ENCODE measurements at regions of chr1 and their contacts with region 1.

Region 1: GRCh38 chr1:54950369-54951163 is 29.9 kb upstream of the TMEM61 start:
- DNase-seq: peak; percentile 60
- H3K4me3 Mint-ChIP-seq: no peak overlapping the region
- H3K27ac Mint-ChIP-seq: peak overlapping the region; percentile 68
- H3K4me1 Mint-ChIP-seq: peaks cover 18% of the 10 kb centered on the region
- H3K27me3 Mint-ChIP-seq: peaks cover 6% of the 10 kb centered on the region

Region 2: DNA sequence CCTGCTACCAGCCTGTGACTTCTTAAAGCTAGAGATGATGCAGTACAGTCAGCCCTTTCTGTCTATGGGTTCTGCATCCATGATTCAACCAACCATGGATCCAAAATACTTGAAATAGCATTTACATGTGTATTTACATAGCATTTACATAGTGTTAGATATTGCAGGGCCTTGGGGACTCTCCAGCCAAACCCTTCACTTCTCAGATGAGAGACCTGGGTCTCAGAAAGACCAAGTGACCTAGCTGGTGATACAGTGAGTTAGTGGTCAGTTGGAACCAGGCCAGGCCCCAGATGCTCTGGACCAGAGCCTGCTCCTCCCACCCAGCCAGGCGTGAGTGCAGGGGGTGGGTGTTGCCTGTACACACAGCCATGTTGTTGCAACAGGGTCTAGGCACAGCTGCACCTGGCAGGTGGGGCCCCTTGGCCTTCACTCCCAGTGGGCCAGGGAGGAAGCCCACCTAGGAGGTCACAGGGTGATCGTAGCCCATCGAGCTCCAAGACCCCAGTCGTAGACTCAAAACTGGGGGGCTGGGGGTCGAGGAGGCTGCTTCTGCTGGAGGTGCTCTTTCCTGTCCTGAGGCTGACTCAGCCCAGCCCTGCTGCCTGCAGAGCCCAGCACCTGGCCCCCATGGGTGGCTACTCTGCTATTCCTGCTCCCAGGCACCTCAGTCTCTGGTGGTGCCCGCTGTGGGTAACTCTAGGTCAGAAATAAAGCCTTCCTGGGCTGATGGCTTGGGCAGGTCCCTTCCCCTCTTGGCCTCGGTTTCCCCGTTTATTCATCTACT is 37.5 kb after region 1 on chr1:
- CTCF ChIA-PET with region 1: interaction called, 15 read pairs
- POLR2A ChIA-PET with region 1: no interaction called
- DNase-seq: no peak
- H3K4me3 Mint-ChIP-seq: no peak overlapping the region
- H3K27ac Mint-ChIP-seq: no peak overlapping the region
- H3K4me1 Mint-ChIP-seq: no peaks in the 10 kb centered on the region
- H3K27me3 Mint-ChIP-seq: peaks cover 10% of the 10 kb centered on the region

Region 3: DNA sequence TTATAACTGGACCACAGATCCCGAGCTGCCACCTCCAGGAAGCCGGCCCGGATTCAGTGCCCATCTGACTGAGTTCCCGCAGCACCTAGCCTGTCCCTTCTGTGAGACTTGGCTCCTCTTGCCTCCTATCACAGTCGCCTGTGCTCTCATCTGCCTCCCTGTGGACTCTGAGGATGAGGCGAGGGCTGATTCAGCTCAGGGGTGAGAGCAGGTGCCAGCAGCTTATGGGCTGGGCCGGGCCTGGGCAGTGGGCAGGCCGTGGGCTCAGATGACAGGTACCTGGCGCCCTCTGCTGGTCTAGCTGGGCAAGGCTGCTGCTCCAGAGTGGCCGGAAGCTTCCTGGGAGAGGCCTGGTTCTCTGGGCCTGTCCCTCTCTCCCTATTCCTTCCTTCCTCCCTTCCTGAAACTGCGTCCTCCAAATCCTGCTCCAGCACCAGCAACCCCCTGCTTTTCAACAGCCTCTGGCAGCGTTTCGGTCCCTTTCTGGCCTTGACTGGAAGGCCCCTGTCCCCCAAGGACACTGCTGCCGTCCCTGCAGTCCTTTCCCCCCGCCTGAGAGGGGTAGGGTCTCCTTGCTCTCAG is 71.5 kb after region 1 on chr1:
- CTCF ChIA-PET with region 1: interaction called, 30 read pairs
- POLR2A ChIA-PET with region 1: no interaction called
- DNase-seq: peak; percentile 73
- H3K4me3 Mint-ChIP-seq: no peak overlapping the region
- H3K27ac Mint-ChIP-seq: no peak overlapping the region
- H3K4me1 Mint-ChIP-seq: peaks cover 3% of the 10 kb centered on the region
- H3K27me3 Mint-ChIP-seq: no peaks in the 10 kb centered on the region

Region 4: DNA sequence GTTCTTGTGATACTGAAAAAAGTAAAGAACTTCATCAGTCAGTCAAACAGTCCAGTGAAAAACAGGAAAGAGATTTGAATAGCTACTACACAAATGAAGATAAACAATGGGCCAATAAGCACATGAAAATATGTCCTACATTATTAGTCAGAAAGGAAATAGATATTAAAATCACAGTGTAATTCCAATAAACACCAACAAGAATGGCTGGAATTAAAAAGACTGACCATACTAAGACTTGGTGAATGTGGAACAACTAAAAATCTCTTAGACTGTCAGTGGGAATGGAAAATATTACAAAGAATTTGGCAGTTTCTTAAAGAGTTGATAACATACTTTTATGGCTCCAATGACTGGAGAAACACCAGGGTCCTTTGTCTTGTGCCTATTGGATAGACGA is 506.4 kb after region 1 on chr1:
- CTCF ChIA-PET with region 1: no interaction called
- POLR2A ChIA-PET with region 1: no interaction called
- DNase-seq: no peak
- H3K4me3 Mint-ChIP-seq: no peak overlapping the region
- H3K27ac Mint-ChIP-seq: no peak overlapping the region
- H3K4me1 Mint-ChIP-seq: no peaks in the 10 kb centered on the region
- H3K27me3 Mint-ChIP-seq: no peaks in the 10 kb centered on the region

Region 5: GRCh38 chr1:55718758-55719671 is 768.4 kb after region 1 on chr1:
- CTCF ChIA-PET with region 1: no interaction called
- POLR2A ChIA-PET with region 1: no interaction called
- DNase-seq: no peak
- H3K4me3 Mint-ChIP-seq: no peak overlapping the region
- H3K27ac Mint-ChIP-seq: no peak overlapping the region
- H3K4me1 Mint-ChIP-seq: no peaks in the 10 kb centered on the region
- H3K27me3 Mint-ChIP-seq: no peaks in the 10 kb centered on the region

Measured in activated CD4-positive, alpha-beta T cell treated with anti-CD3 and anti-CD28 coated beads, Interleukin-2, amount 10 ng/mL, durations not matched to agents 7 days and 5 days (primary cell).